CD8-positive, alpha-beta memory T cell (primary cell): ENCODE measurements at regions of chr2 and their contacts with region 1.

Region 1: GRCh38 chr2:102753563-102754159 is 8.2 kb upstream of the TMEM182 start:
- DNase-seq: peak in 4 of 5 donors; percentile 6 to 52 (median 16)
- H3K4me3 ChIP-seq: no peak overlapping the region
- H3K4me3 Mint-ChIP-seq: no peak overlapping the region
- H3K27ac ChIP-seq: no peak overlapping the region
- H3K27ac Mint-ChIP-seq: no peak overlapping the region
- H3K4me1 ChIP-seq: no peaks in the 10 kb centered on the region
- H3K4me1 Mint-ChIP-seq: no peaks in the 10 kb centered on the region
- H3K27me3 ChIP-seq: no peaks in the 10 kb centered on the region
- H3K27me3 Mint-ChIP-seq: no peaks in the 10 kb centered on the region

Region 2: DNA sequence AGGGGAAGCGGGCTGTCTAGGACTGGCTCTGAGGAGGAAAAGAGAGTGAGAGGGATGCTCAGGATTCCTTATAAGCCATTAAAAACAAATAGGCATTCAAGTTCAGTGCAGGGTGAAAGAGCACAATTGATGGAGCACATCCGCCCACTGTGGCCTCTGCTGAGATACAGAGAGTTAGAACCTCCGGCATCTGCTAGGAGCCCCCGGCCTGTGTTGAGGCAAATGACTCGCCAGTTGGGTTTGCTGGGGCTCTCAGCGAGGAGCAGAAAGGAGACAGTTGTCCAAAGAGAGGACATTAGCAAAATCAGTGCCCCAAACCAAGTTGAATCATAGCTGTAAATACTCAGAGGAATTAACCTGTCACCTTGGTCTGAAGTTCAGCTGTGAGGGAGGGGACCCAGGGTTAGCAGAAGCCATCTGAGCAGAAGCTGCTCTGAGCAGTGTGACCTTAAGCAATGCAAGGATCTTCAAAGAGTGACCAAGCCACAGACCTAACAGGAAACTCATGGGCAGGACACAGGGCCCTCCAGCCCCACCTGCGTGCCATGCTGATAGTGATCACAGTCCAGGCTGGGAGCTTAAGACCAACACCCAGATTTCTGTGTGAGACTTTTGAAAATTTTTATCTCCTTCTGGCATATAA is 354.0 kb before region 1 on chr2:
- CTCF ChIA-PET with region 1: no interaction called
- POLR2A ChIA-PET with region 1: no interaction called
- DNase-seq: no peak
- H3K4me3 ChIP-seq: no peak overlapping the region
- H3K4me3 Mint-ChIP-seq: no peak overlapping the region
- H3K27ac ChIP-seq: no peak overlapping the region
- H3K27ac Mint-ChIP-seq: peak overlapping the region in 2 of 8 donors; percentile 42 to 66
- H3K4me1 ChIP-seq: no peaks in the 10 kb centered on the region
- H3K4me1 Mint-ChIP-seq: peaks cover 22 to 28% (median 23%) of the 10 kb centered on the region in 3 donors
- H3K27me3 ChIP-seq: no peaks in the 10 kb centered on the region
- H3K27me3 Mint-ChIP-seq: no peaks in the 10 kb centered on the region

Region 3: GRCh38 chr2:102736410-102737409 is 17.0 kb before region 1 on chr2:
- CTCF ChIA-PET with region 1: interaction called, 26 read pairs
- POLR2A ChIA-PET with region 1: no interaction called
- DNase-seq: peak; percentile 81 to 88 (median 82)
- H3K4me3 ChIP-seq: peak overlapping the region; percentile 86
- H3K4me3 Mint-ChIP-seq: peak overlapping the region; percentile 96 to 98 (median 97)
- H3K27ac ChIP-seq: peak overlapping the region; percentile 66
- H3K27ac Mint-ChIP-seq: peak overlapping the region; percentile 84 to 95 (median 92)
- H3K4me1 ChIP-seq: peaks cover 32% of the 10 kb centered on the region
- H3K4me1 Mint-ChIP-seq: peaks cover 42 to 56% (median 47%) of the 10 kb centered on the region in 3 donors
- H3K27me3 ChIP-seq: no peaks in the 10 kb centered on the region
- H3K27me3 Mint-ChIP-seq: no peaks in the 10 kb centered on the region

Region 4: DNA sequence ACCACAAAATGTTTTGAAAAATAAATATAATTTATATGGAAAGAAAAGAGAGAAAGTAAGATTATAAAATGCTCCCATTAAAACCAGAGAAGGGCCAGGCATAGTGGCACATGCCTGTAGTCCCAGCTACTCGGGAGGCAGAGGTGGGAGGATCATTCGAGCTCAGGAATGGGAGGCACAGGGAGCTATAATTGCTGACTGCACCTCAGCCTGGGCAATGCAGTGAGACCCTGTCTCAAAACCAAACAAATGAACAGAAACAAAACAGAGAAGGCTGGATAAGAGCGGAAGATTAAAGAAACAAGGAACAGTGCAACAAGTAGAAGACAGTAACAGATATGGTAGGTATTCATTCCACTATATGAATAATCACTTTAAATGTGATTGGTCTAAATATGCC is 10.4 kb before region 1 on chr2:
- CTCF ChIA-PET with region 1: interaction called, 13 read pairs
- POLR2A ChIA-PET with region 1: no interaction called
- DNase-seq: no peak
- H3K4me3 ChIP-seq: no peak overlapping the region
- H3K4me3 Mint-ChIP-seq: no peak overlapping the region
- H3K27ac ChIP-seq: no peak overlapping the region
- H3K27ac Mint-ChIP-seq: no peak overlapping the region
- H3K4me1 ChIP-seq: no peaks in the 10 kb centered on the region
- H3K4me1 Mint-ChIP-seq: peaks cover 0 to 3% (median 0%) of the 10 kb centered on the region in 3 donors
- H3K27me3 ChIP-seq: no peaks in the 10 kb centered on the region
- H3K27me3 Mint-ChIP-seq: peaks cover 0 to 3% of the 10 kb centered on the region in 2 donors

Region 5: DNA sequence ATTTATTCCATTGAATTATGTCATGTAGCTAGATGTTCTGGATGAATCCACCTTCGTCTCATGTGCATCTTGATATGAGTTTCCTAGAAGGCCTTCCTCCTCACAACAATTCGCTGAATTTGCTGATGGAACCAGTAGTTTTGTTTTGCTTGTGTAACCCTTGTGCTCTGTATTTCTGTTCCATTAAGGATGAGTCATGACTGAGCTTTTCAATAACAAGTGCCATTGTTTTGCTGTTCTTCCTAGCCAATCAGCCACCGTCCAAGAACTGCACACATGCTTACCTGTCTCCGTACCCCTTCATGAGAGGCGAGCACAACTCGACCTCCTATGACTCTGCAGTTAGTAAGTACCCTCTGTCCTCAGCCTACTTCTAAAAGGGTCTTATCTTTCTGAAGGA is 10.4 kb after region 1 on chr2:
- CTCF ChIA-PET with region 1: interaction called, 20 read pairs
- POLR2A ChIA-PET with region 1: no interaction called
- DNase-seq: no peak
- H3K4me3 ChIP-seq: no peak overlapping the region
- H3K4me3 Mint-ChIP-seq: no peak overlapping the region
- H3K27ac ChIP-seq: no peak overlapping the region
- H3K27ac Mint-ChIP-seq: no peak overlapping the region
- H3K4me1 ChIP-seq: no peaks in the 10 kb centered on the region
- H3K4me1 Mint-ChIP-seq: no peaks in the 10 kb centered on the region
- H3K27me3 ChIP-seq: no peaks in the 10 kb centered on the region
- H3K27me3 Mint-ChIP-seq: peaks cover 0 to 1% of the 10 kb centered on the region in 2 donors

Region 6: DNA sequence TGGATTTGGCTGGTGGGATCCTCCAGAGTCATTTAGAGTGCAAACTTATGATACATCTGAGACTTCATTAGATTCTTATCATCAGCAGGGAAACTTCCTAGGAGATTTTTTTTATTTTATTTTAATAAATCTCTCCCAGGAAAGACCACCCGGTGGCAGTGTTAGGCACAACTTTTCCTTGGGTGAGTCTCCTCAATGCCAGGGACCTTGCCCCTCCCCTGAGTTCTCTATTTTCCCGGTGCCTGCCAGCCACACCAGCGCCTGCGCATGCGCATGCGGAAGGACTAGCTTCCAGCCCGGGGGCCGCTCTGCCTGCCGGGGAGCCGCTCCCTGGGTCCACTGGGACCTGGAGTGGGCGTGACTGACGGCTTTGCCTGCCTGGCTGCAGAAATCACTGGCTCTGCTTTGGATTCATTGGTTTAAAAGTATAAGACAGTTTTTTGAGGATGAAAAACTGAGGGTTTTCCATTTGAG is 94.7 kb after region 1 on chr2:
- CTCF ChIA-PET with region 1: no interaction called
- POLR2A ChIA-PET with region 1: no interaction called
- DNase-seq: no peak
- H3K4me3 ChIP-seq: no peak overlapping the region
- H3K4me3 Mint-ChIP-seq: no peak overlapping the region
- H3K27ac ChIP-seq: no peak overlapping the region
- H3K27ac Mint-ChIP-seq: no peak overlapping the region
- H3K4me1 ChIP-seq: no peaks in the 10 kb centered on the region
- H3K4me1 Mint-ChIP-seq: no peaks in the 10 kb centered on the region
- H3K27me3 ChIP-seq: no peaks in the 10 kb centered on the region
- H3K27me3 Mint-ChIP-seq: peaks cover 2 to 22% of the 10 kb centered on the region in 2 donors

Region 7: DNA sequence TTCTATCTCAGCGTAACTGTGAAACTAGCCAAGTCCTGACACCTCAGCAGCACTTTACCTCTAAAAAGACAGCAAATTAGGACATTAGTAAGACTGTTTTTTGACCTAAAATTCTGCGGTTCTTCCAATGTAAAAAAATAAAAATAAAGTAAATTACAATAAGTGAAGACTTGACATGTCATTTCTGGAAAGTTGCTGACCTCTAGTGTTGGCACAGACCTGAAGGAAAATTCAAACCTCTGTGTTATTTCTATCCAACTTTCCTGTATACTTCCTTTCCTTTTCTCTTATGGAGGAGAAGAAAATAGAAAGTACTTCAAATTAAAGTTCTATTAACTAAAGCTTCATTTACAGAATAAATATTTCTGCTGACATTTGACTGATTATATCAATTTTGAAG is 118.7 kb after region 1 on chr2:
- CTCF ChIA-PET with region 1: no interaction called
- POLR2A ChIA-PET with region 1: no interaction called
- DNase-seq: no peak
- H3K4me3 ChIP-seq: no peak overlapping the region
- H3K4me3 Mint-ChIP-seq: no peak overlapping the region
- H3K27ac ChIP-seq: no peak overlapping the region
- H3K27ac Mint-ChIP-seq: no peak overlapping the region
- H3K4me1 ChIP-seq: no peaks in the 10 kb centered on the region
- H3K4me1 Mint-ChIP-seq: no peaks in the 10 kb centered on the region
- H3K27me3 ChIP-seq: no peaks in the 10 kb centered on the region
- H3K27me3 Mint-ChIP-seq: peaks cover 0 to 2% of the 10 kb centered on the region in 2 donors

Region 8: DNA sequence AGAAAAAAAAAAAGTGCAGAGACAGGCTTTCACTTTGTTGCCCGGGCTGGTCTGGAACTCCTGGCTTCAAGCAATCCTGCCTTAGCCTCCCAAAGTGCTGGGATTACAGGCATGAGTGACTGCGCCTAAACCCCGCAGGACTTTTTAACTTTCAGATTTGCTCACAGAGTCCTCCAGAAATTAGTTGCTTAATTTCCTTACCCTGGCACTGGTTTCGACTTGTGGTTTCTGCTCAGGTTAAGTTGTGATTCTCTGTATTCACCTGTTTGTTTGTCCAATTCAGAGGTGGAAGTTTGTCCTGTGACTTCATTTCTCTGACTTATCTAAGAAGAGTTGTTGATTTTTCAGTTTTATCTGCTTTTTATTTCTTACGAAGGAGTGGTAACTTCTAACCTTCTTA is 246.3 kb after region 1 on chr2:
- CTCF ChIA-PET with region 1: no interaction called
- POLR2A ChIA-PET with region 1: no interaction called
- DNase-seq: no peak
- H3K4me3 ChIP-seq: no peak overlapping the region
- H3K4me3 Mint-ChIP-seq: no peak overlapping the region
- H3K27ac ChIP-seq: no peak overlapping the region
- H3K27ac Mint-ChIP-seq: no peak overlapping the region
- H3K4me1 ChIP-seq: no peaks in the 10 kb centered on the region
- H3K4me1 Mint-ChIP-seq: no peaks in the 10 kb centered on the region
- H3K27me3 ChIP-seq: no peaks in the 10 kb centered on the region
- H3K27me3 Mint-ChIP-seq: no peaks in the 10 kb centered on the region